Activated CD4-positive, alpha-beta memory T cell treated with anti-CD3 and anti-CD28 coated beads for 36 hours (primary cell): ENCODE measurements at regions of chr7 and their contacts with region 1.

Region 1: DNA sequence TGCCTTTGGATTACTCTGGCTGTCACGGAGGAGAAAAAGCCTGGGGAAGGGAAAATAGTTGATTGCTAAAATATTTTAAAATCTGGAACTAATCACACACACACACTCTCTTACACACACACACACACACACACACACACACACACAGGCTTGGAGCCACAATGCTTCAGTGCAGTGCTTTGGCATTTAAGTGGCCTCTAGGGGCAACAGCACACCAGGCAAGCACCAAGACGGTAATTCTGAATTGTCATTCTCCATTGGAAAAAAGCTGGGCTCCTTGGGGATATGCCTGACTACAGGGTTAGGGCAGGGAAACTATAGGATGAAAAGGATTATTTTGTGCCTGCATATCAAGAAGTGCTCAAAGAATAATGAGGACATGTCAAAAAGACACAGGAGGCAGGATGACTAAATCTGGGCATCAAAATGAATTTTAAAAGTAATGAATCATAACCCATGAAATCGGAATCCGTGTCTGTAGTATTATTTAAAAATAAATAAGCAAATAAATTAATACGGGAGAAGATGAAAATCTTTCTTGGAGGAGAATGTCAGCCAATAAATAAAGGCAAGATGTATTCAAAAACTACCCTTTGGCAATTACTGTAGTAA is 30.4 kb upstream of the DDC start:
- DNase-seq: peak; percentile 24
- H3K4me3 Mint-ChIP-seq: no peak overlapping the region
- H3K27ac Mint-ChIP-seq: no peak overlapping the region
- H3K4me1 Mint-ChIP-seq: peaks cover 21% of the 10 kb centered on the region
- H3K27me3 Mint-ChIP-seq: peaks cover 6% of the 10 kb centered on the region

Region 2: DNA sequence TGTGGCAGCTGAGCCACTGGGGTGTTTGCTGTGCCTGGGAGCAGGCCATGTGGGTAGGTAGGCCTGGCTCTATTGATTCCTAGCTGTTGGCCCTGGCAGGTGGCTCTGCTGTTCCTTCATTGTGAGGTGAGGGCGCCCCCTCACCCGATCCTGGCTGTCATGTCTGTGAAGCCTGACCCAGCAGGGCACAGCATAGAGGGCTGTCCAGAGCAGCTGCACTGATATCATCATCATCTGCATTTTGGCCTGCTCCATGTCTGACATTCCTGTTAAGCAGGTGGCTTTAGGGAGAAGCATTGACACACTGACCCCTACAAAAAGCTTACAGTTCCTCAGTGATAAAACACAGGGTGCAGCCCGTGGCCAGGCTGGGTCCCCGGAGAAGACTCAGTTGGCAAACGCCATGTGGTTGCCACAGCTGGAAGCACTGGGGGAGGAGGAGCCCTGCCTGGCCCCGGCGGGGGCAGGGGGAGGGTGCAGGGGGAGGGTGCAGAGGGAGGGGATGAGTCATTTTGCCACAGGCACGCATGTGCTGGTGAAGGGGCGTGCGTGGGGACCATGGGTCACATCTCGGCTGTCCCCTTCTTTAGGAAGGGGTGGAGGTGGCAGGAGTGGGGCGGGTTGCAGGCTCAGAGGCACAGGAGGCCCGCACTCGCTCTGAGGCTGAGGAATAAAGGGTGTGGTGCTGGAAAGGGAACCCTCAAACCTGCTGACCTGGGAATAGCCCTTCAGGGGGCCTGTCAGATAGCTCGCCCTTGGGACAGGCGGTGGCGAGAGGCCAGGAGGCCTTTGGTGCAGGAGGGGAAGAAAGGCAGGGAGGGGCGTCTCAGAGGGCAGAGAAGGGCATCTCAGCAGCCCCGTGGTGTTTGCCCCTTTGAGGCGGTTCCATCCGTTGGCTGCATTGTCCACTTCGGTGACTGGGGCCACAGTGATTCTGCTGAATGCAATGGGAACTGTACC is 259.5 kb before region 1 on chr7:
- CTCF ChIA-PET with region 1: no interaction called
- POLR2A ChIA-PET with region 1: no interaction called
- intact Hi-C with region 1: no loop called
- DNase-seq: peak; percentile 93
- H3K4me3 Mint-ChIP-seq: no peak overlapping the region
- H3K27ac Mint-ChIP-seq: no peak overlapping the region
- H3K4me1 Mint-ChIP-seq: peaks cover 2% of the 10 kb centered on the region
- H3K27me3 Mint-ChIP-seq: no peaks in the 10 kb centered on the region

Region 3: GRCh38 chr7:50534690-50535290 is 60.8 kb before region 1 on chr7:
- CTCF ChIA-PET with region 1: no interaction called
- POLR2A ChIA-PET with region 1: interaction called, 4 read pairs
- intact Hi-C with region 1: loop called (anchors 2 kb)
- DNase-seq: peak; percentile 33
- H3K4me3 Mint-ChIP-seq: no peak overlapping the region
- H3K27ac Mint-ChIP-seq: no peak overlapping the region
- H3K4me1 Mint-ChIP-seq: peaks cover 27% of the 10 kb centered on the region
- H3K27me3 Mint-ChIP-seq: peaks cover 7% of the 10 kb centered on the region

Region 4: GRCh38 chr7:50812841-50813475 is 217.4 kb after region 1 on chr7:
- CTCF ChIA-PET with region 1: no interaction called
- POLR2A ChIA-PET with region 1: no interaction called
- intact Hi-C with region 1: no loop called
- DNase-seq: no peak
- H3K4me3 Mint-ChIP-seq: no peak overlapping the region
- H3K27ac Mint-ChIP-seq: no peak overlapping the region
- H3K4me1 Mint-ChIP-seq: no peaks in the 10 kb centered on the region
- H3K27me3 Mint-ChIP-seq: peaks cover 5% of the 10 kb centered on the region